OCI-LY7 (cell line): ENCODE measurements at regions of chr6 and their contacts with region 1.

Region 1: DNA sequence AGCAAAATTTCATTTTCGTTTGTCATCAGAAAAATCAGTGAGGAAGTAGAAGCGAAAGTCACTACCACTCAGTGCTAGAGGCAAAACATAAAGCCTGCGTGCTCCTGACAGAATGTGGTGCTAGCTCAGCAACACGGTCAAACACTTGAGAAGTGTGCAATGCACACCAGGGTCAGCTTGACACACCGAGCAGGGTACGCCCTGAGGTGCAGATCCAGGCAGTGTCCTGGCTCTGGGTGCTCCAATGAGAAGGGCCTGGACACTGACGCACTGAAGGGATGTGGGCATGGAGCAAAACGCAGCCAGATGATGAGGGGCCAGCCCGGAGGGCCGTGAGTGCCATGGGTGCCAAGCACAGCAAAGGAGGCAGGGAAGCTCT is 5.9 kb downstream of the RNASET2 start:
- DNase-seq: peak; percentile 66
- H3K4me3 ChIP-seq: peak overlapping the region; percentile 64
- H3K27ac ChIP-seq: peak overlapping the region; percentile 87
- H3K4me1 ChIP-seq: peaks cover 60% of the 10 kb centered on the region
- CTCF ChIP-seq: no peak

Region 2: DNA sequence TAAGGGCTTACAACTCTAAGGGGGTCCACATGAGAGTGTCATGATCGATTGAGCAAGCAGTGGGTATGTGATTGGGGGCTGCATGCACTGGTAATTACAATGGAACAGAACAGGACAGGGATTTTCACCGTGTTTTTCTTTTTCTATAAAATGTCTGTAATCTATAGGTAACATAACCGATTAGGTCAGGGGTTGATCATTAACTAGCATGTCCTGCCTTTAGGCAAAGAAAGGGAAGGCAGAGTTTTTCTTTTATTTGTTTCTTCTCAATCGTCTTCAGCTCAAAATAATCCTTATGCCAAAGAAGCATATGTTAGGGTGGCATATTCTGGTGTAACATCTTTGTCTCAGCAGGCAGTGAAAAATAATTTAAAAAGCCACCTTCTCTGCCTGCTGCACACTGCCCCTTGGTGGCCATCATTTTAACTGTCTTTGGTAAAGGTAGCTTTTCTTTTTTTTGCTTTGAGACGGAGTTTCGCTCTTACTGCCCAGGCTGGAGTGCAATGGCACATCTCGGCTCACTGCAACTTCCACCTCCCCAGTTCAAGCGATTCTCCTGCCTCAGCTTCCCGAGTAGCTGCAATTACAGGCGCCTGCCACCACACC is 39.1 kb after region 1 on chr6:
- CTCF ChIA-PET with region 1: interaction called, 6 read pairs
- POLR2A ChIA-PET with region 1: interaction called, 4 read pairs
- intact Hi-C with region 1: loop called (anchors 2 kb)
- DNase-seq: peak; percentile 60
- H3K4me3 ChIP-seq: no peak overlapping the region
- H3K27ac ChIP-seq: no peak overlapping the region
- H3K4me1 ChIP-seq: peaks cover 4% of the 10 kb centered on the region
- CTCF ChIP-seq: peak; percentile 77